Spleen (tissue), 13 donors: ENCODE measurements at regions of chr2 and their contacts with region 1.

Region 1: DNA sequence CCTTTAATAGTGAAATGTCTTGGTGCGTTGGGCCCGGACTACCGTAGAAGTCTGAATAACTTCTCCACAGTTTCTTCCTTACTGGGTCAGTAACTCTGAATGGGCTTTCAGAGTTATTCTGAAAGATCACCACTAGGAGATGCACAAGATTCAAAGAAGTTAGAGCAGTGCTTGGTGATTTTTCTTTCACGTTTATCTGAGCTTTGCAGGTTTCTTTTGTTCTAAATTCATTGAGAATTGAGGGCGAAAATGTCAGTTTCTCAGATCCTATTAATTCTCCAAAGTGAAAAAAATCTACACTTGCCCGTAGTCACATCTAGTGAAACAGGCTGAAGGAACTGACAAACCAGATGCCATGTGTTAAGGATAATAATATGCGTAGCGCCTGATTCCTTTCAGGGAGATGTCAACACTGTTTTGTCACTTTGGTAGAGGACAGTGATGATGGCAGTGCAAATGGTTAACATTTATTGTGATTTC is 70.1 kb downstream of the QPCT start:
- DNase-seq: no peak
- H3K4me3 ChIP-seq: no peak overlapping the region
- H3K27ac ChIP-seq: no peak overlapping the region
- H3K4me1 ChIP-seq: peaks cover 0 to 13% (median 8%) of the 10 kb centered on the region in 6 donors
- H3K27me3 ChIP-seq: no peaks in the 10 kb centered on the region
- CTCF ChIP-seq: peak; percentile 40 to 87 (median 75)
- POLR2A ChIP-seq: no peak

Region 2: GRCh38 chr2:37164757-37165156 is 249.8 kb before region 1 on chr2:
- intact Hi-C with region 1: no loop called
- DNase-seq: no peak
- H3K4me3 ChIP-seq: no peak overlapping the region
- H3K27ac ChIP-seq: no peak overlapping the region
- H3K4me1 ChIP-seq: peaks cover 0 to 8% (median 5%) of the 10 kb centered on the region in 6 donors
- H3K27me3 ChIP-seq: no peaks in the 10 kb centered on the region
- CTCF ChIP-seq: no peak
- POLR2A ChIP-seq: no peak

Region 3: GRCh38 chr2:37832590-37833197 is 418.2 kb after region 1 on chr2:
- intact Hi-C with region 1: loop called (anchors 2 kb)
- DNase-seq: peak; percentile 93
- H3K4me3 ChIP-seq: no peak overlapping the region
- H3K27ac ChIP-seq: peak overlapping the region in 1 of 8 donors; percentile 39
- H3K4me1 ChIP-seq: peaks cover 0 to 43% (median 17%) of the 10 kb centered on the region in 6 donors
- H3K27me3 ChIP-seq: no peaks in the 10 kb centered on the region
- CTCF ChIP-seq: peak; percentile 78 to 93 (median 84)
- POLR2A ChIP-seq: no peak